ENCODE measurements at regions of chr7 and their contacts with region 1.

Region 1: DNA sequence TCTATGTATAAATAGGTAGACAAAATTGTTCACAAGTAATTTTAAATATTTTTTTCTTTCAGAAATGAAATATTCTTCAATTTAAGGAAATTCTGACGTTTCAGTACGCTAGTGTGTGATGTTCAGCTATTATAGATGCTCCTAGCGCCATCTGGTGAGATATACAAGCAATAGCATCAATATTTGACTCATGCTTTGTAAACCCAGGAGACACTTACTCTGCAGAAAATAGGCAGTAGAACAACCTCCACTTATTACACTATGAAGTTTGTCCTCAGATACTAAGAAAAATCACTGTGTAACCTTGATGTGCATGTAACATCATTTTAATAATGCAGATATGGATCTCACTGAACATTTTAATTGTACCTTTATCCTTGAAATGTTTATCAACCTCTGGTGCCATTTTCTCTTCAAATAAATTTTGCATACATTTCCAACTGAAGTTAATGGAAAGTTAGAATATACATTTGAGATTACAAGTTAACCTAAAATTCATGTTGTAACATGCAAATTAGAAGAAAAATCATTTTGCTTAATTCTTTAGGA is 151.5 kb upstream of the FAM3C start:
- DNase-seq: no peak
- H3K4me3 ChIP-seq: no peak overlapping the region
- H3K27ac ChIP-seq: no peak overlapping the region
- H3K4me1 ChIP-seq: peaks cover 0 to 8% (median 3%) of the 10 kb centered on the region in 4 donors
- H3K27me3 ChIP-seq: no peaks in the 10 kb centered on the region
- CTCF ChIP-seq: peak; percentile 74 to 75

Region 2: GRCh38 chr7:121138262-121138933 is 409.2 kb before region 1 on chr7:
- intact Hi-C with region 1: loop called (anchors 5 kb)
- DNase-seq: no peak
- H3K4me3 ChIP-seq: no peak overlapping the region
- H3K27ac ChIP-seq: no peak overlapping the region
- H3K4me1 ChIP-seq: peaks cover 0 to 17% (median 0%) of the 10 kb centered on the region in 4 donors
- H3K27me3 ChIP-seq: no peaks in the 10 kb centered on the region
- CTCF ChIP-seq: no peak

Region 3: DNA sequence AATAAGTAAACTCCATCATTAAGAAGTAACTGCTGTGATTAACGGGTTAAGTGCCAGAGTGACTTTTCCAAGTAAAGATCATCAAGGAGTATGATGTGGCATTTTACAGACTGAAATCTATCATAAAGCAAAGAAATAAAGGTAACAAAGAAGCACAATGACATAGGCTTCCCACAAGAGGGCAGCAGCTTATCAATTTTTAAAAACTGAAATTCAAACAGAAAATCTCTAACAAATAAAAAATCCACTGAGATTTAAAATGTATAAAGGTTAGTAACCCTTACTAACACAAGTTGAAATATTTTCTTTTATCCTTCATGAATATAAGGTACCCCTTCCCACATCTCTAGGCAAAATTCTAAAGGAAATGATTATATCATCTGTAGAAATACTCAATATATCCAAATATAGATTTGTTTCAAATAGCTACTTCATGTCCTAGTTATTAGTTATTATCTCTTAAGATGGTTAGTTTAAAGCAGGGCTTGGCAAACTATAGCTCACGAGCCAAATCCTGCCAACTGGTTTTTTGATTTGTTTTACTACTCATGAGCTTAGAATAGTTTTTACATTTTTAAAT is 180.7 kb before region 1 on chr7:
- intact Hi-C with region 1: loop called (anchors 2 kb)
- DNase-seq: no peak
- H3K4me3 ChIP-seq: no peak overlapping the region
- H3K27ac ChIP-seq: no peak overlapping the region
- H3K4me1 ChIP-seq: peaks cover 0 to 6% (median 2%) of the 10 kb centered on the region in 4 donors
- H3K27me3 ChIP-seq: no peaks in the 10 kb centered on the region
- CTCF ChIP-seq: peak; percentile 72 to 77